Posterior cingulate gyrus (tissue), 11 donors: ENCODE measurements at regions of chr9 and their contacts with region 1.

Region 1: DNA sequence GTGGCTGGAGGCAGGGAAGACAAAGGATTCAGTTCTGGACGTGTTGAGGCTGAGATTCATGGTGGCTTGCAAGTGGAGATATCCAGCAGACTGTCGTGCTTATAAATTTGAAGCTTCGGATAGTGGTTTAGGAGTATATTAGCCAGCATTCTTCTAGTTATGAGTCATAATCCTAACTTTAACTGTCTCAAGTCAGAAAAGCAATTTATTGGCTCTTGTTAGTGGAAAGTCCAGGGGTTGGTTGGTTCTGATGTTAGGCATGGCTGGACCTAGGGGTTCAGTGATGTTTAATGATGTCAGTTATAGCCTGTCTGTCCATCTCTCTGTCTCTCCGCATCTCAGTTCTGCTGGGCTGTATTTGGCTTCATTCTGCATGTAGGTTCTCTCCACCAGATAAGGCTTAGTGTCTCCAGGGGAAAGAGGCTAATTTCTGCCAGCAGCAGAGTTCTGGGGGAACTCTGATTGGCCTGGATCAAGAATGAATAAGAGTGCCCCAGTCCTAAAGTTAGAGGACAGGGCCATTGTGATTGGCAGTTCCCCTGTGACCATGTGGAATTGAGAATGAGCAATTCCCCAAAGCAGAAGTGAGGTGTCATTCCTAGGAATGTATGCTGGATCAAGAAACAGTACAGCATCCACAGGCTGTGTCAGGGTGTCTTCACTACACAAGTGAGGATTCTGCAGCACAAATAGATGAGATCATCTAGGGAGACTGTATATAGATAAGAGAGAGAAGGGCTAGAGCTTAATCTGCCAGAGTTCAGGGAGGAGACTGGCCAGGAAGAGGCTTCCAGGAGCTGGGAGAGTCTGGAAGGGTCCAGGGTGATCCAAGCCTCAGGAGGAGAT is 72.9 kb upstream of the SHB start:
- DNase-seq: no peak

Region 2: GRCh38 chr9:38346811-38347210 is 204.8 kb after region 1 on chr9:
- intact Hi-C with region 1: loop called (anchors 5 kb)
- DNase-seq: peak in 1 of 10 donors; percentile 32

Region 3: DNA sequence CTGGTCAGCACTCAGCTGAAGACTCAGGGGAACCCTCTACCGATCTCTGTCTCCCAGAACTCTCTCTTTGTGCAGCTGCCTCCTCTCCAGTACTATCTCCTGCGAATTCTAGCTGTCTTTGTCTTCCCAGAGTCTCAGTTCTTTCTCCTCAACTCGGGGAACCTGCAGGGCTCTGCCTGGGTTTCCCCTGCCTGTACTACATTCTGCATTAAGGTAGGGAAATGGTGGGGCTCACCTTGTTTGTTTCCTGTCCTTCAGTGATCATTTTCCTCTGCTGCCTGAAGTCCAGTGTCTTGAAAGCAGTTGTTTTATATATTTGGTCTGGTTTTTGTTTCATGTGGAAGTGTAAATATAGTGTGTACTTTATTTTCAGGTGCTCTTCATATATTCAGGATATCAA is 325.4 kb after region 1 on chr9:
- intact Hi-C with region 1: no loop called
- DNase-seq: no peak